Activated CD4-positive, alpha-beta T cell treated with anti-CD3 and anti-CD28 coated beads, Interleukin-2, amount 10 ng/mL, durations not matched to agents 24 days and 14 days (primary cell): ENCODE measurements at regions of chr6 and their contacts with region 1.

Region 1: DNA sequence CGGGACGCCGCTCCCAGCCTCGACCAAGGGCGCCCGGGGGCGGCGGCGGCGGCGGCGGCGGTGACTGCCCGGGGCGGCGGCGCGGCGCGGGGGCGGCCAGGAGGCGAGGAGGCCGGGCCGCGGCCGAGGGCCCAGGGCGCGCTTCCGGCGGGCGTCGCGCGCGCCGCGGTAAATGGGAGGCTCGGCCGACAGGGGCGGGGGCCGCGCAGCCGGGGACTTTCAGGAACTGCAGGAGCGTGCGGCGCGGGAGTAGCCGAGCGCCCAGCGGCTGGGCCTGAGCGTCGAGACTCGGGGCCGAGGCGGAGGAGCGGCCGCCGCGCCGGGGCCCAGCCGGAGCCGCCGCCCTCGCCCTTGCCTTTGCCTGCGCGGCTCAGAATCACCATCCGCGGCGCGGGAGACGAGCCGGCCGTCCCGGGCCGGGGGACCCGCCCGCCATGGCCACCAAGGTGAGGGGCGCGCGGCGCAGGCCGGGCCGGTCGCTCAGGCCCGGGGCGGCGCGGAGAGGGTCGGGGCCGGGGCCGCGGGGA is at the start of gene SNX9:
- DNase-seq: peak; percentile 89
- H3K4me3 Mint-ChIP-seq: peak within 1 kb of the TSS; percentile 95
- H3K27ac Mint-ChIP-seq: peak within 1 kb of the TSS; percentile 99
- H3K4me1 Mint-ChIP-seq: peaks cover 34% of the 10 kb centered on the region
- H3K27me3 Mint-ChIP-seq: peaks cover 34% of the 10 kb centered on the region
- total RNA-seq, gene SNX9: 33.7 and 34.0 TPM in 2 replicates

Region 2: DNA sequence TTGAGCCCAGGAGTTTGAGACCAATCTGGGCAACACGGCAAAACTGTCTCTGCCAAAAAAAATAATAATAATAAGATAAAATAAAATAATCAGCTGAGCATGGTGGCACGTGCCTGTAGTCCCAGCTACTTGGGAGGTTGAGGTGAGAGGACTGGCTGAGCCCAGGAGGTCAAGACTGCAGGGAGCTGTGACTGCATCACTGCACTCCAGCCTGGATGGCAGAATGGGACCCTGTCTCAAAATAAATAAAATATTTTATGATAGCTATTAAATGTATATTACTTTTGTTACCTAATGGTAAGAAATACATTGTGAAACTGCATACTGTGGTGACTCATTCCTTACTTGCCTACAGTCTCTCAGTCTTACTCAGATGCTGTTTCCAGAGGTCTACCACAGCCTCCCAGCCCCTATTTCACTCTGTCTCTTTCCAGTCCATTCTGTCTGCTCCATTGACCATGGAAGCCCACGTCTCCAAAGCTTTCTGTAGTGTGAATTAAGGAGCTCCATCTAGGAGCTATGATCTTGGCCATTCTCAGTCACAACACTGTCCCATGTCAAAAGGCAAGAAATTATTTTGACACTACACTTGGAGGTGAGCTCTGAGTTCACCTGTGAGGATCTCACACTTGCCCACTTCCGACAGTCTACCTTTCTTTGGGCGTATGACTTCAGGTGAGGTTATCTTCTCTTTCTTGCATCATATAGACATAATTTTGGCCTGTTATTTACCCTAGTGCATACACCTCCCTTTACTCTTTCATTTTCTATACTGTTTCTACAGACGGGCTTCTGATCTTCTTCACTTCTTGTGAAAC is 22.4 kb before region 1 on chr6:
- intact Hi-C with region 1: loop called (anchors 2 kb)
- DNase-seq: peak; percentile 77
- H3K4me3 Mint-ChIP-seq: peak overlapping the region; percentile 22
- H3K27ac Mint-ChIP-seq: peak overlapping the region; percentile 36
- H3K4me1 Mint-ChIP-seq: peaks cover 34% of the 10 kb centered on the region
- H3K27me3 Mint-ChIP-seq: peaks cover 34% of the 10 kb centered on the region

Region 3: DNA sequence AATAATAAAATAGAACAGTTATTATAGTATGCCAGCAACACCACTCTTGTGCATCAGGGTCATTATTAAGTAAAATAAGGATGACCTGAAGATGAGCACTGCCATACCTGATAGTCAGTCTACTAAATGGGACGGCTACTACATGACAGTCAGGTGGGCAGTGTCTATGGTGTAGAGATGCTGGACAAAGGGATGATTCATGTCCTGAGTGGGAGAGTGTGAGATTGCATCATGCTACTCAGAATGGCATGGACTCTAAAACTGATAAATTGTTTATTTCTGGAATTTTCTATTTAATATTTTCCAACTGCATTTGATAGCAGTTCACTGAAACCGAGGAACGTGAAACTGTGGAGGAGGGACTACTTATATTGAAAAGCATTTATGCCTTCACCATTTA is 38.8 kb after region 1 on chr6:
- intact Hi-C with region 1: loop called (anchors 2 kb)
- DNase-seq: no peak
- H3K4me3 Mint-ChIP-seq: no peak overlapping the region
- H3K27ac Mint-ChIP-seq: no peak overlapping the region
- H3K4me1 Mint-ChIP-seq: peaks cover 42% of the 10 kb centered on the region
- H3K27me3 Mint-ChIP-seq: peaks cover 35% of the 10 kb centered on the region

Region 4: GRCh38 chr6:157873735-157874344 is 50.8 kb after region 1 on chr6:
- intact Hi-C with region 1: loop called (anchors 2 kb)
- DNase-seq: peak; percentile 95
- H3K4me3 Mint-ChIP-seq: no peak overlapping the region
- H3K27ac Mint-ChIP-seq: no peak overlapping the region
- H3K4me1 Mint-ChIP-seq: peaks cover 19% of the 10 kb centered on the region
- H3K27me3 Mint-ChIP-seq: no peaks in the 10 kb centered on the region

Region 5: DNA sequence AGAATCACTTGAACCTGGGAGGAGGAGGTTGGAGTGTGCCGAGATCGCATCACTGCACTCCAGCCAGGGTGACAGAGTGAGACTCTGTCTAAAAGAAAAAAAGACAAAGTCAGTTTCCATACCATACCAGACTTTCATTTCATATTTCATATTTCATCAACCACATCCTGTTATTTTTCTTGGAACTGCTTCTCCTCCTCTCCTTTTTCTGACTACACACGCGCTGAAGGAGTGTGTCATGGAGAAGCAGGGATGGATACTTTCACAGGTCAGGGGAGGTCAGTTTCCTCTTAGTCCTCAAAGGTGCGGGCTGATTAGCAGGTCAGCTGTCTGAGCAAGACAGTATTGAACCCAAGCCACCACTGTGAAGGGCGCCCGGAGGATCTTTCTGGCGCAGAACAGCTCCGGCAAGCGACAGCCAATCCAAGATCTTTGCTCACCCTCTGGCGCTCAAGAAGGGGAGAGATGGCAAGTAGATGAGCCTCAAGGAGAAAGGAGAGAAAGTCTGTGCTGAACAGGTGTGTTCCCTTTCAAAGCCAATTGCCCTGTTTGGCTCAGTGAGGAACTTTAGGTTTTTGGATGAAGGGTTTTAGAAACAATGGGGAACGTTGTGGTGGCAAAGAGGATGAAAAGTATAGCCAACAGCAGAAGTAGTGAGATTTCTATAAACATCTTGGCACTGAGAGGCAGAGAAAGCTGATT is 139.7 kb after region 1 on chr6:
- intact Hi-C with region 1: loop called (anchors 5 kb)
- DNase-seq: peak; percentile 80
- H3K4me3 Mint-ChIP-seq: peak overlapping the region; percentile 80
- H3K27ac Mint-ChIP-seq: peak overlapping the region; percentile 95
- H3K4me1 Mint-ChIP-seq: peaks cover 29% of the 10 kb centered on the region
- H3K27me3 Mint-ChIP-seq: no peaks in the 10 kb centered on the region